CD8-positive, alpha-beta T cell (primary cell): ENCODE measurements at regions of chr17 and their contacts with region 1.

Region 1: GRCh38 chr17:75405365-75406221 is at the start of gene GRB2:
- DNase-seq: peak; percentile 99 to 100 (median 99)
- ATAC-seq: peak; percentile 83
- H3K4me3 ChIP-seq: peak within 1 kb of the TSS; percentile 58 to 100
- H3K4me3 Mint-ChIP-seq: peak within 1 kb of the TSS; percentile 98
- H3K27ac ChIP-seq: peak within 1 kb of the TSS; percentile 77 to 86
- H3K27ac Mint-ChIP-seq: peak within 1 kb of the TSS; percentile 95
- H3K4me1 ChIP-seq: peaks cover 37% of the 10 kb centered on the region
- H3K4me1 Mint-ChIP-seq: peaks cover 47% of the 10 kb centered on the region
- H3K27me3 ChIP-seq: no peaks in the 10 kb centered on the region
- H3K27me3 Mint-ChIP-seq: no peaks in the 10 kb centered on the region
- CTCF ChIP-seq: no peak
- total RNA-seq, gene GRB2: 96.2 to 99.4 TPM

Region 2: DNA sequence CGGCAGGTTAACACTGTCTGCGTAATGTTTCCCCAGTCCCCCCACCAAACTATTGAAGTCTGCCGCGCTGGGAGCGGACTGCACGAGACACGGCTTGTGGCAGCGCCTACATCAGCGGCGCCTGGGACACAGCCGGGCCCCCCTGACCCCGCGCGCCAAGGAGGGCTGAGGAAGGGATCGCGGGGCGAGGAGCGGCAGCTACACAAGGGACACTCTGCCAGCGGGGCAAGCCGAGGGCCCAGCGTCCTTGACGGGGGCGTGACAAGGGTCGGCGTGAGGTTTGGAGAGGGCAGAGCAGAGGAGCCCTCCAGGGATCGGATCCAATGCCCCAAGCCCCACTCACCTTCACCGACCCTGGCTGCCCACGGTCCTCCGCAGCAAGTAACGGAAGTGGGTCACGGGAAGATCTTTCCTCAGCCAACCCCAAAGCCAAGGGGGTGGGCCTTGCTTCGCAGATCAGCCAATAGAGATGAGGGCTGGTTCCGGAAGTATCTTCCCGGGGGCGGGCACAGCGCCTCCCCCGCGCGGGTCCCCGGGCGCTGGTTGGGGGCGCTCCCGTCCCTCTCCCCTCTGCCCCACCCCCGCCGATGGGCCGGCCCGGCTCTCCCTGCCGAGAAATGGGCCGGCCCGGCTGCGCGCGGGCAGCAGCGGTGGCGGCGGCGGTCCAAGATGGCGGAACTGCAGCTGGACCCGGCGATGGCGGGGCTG is 358.9 kb before region 1 on chr17 and contains the starts of genes ATP5PD and KCTD2:
- CTCF ChIA-PET with region 1: no interaction called
- POLR2A ChIA-PET with region 1: no interaction called
- intact Hi-C with region 1: loop called in 1 of 2 experiments (anchors 1 kb)
- DNase-seq: peak; percentile 81 to 97 (median 93)
- ATAC-seq: peak; percentile 91
- H3K4me3 ChIP-seq: peak within 1 kb of the TSS; percentile 99
- H3K4me3 Mint-ChIP-seq: peak within 1 kb of the TSS; percentile 99
- H3K27ac ChIP-seq: peak within 1 kb of the TSS; percentile 93 to 97
- H3K27ac Mint-ChIP-seq: peak within 1 kb of the TSS; percentile 98
- H3K4me1 ChIP-seq: peaks cover 21% of the 10 kb centered on the region
- H3K4me1 Mint-ChIP-seq: peaks cover 54% of the 10 kb centered on the region
- H3K27me3 ChIP-seq: no peaks in the 10 kb centered on the region
- H3K27me3 Mint-ChIP-seq: no peaks in the 10 kb centered on the region
- CTCF ChIP-seq: no peak
- total RNA-seq, gene ATP5PD: 69.9 to 71.6 TPM
- total RNA-seq, gene KCTD2: 29.4 to 31.7 TPM

Region 3: DNA sequence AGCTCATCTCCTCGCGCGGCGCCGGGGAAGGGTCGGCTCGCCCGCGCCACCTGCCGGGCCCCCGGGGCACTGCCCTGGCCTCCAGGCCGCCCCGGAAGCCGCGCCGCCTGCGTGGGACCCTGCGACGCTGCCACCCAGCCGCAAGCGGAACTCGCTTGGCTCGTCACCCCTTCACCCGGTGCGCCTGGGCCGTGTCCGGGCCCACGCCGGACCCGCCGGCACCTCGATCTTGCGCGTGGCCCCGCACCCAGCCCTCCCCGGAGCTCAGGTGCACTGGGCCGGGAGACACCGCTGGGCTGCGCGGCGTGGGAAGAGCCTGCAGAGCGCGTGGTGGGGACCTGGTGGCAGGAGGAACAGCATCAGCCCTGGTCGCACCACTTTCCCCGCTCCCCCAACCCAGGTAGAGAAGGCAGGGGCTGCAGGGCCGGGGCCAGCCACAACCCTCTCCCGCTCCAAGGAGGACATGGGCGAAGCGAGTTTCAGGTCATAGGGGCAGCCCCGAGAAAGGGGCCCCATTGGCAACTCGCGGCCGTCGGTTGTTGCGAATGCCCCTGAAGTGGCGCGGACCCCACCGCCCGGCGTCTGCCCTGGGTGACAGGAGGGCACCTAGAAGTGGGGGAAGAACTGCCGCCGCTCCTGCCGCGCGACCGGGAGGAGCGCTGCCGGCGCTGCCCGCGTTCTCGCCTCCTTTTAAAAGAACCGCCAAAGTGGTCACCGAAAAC is 134.2 kb before region 1 on chr17:
- CTCF ChIA-PET with region 1: interaction called, 5 read pairs
- POLR2A ChIA-PET with region 1: interaction called, 6 read pairs
- intact Hi-C with region 1: loop called in 1 of 2 experiments (anchors 2 kb)
- DNase-seq: peak; percentile 75 to 94 (median 88)
- ATAC-seq: peak; percentile 92
- H3K4me3 ChIP-seq: peak overlapping the region; percentile 84 to 93
- H3K4me3 Mint-ChIP-seq: peak overlapping the region; percentile 81
- H3K27ac ChIP-seq: peak overlapping the region; percentile 82 to 91
- H3K27ac Mint-ChIP-seq: peak overlapping the region; percentile 84
- H3K4me1 ChIP-seq: peaks cover 18% of the 10 kb centered on the region
- H3K4me1 Mint-ChIP-seq: peaks cover 25% of the 10 kb centered on the region
- H3K27me3 ChIP-seq: no peaks in the 10 kb centered on the region
- H3K27me3 Mint-ChIP-seq: no peaks in the 10 kb centered on the region
- CTCF ChIP-seq: peak; percentile 65

Region 4: GRCh38 chr17:75393523-75394331 is 11.9 kb before region 1 on chr17:
- CTCF ChIA-PET with region 1: interaction called, 5 read pairs
- POLR2A ChIA-PET with region 1: interaction called, 4 read pairs
- intact Hi-C with region 1: loop called (anchors 1 kb)
- DNase-seq: peak; percentile 47 to 92 (median 83)
- ATAC-seq: peak; percentile 84
- H3K4me3 ChIP-seq: peak overlapping the region; percentile 49 to 53
- H3K4me3 Mint-ChIP-seq: peak overlapping the region; percentile 94
- H3K27ac ChIP-seq: peak overlapping the region; percentile 3 to 63
- H3K27ac Mint-ChIP-seq: peak overlapping the region; percentile 90
- H3K4me1 ChIP-seq: peaks cover 55% of the 10 kb centered on the region
- H3K4me1 Mint-ChIP-seq: peaks cover 78% of the 10 kb centered on the region
- H3K27me3 ChIP-seq: no peaks in the 10 kb centered on the region
- H3K27me3 Mint-ChIP-seq: no peaks in the 10 kb centered on the region
- CTCF ChIP-seq: no peak

Region 5: DNA sequence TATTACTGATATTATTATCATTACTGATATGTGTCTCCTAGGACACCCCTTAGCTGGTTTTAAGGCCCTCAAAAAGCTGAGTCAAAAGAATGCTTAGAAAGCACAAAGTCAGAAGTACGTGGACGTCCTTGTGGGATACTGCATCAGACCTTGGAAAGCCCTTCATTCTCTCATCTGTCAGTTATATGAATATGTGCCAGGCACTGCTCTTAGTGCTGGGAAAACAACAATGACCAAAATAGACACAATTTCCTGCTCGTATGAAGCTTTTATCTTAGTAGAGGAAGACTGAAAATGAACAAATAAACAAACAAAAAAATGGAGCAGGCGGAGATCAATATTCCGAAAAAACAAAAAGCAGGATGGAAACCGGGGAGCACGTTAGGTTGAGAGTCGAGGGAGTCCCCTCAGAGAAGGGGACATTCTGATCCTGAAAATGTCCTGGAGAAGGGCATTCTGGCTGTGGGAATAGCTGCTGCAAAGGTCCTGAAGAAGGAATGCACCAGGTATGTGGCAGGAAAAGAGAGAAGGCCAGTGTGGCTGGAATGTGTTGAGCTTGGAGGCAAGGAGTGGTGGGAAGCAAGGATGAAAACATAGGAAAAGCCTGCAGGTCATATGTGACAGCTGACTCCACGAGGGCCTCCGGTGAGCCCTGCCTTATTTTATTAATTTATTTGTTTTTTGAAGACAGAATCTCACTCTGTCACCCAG is 35.3 kb after region 1 on chr17:
- CTCF ChIA-PET with region 1: no interaction called
- POLR2A ChIA-PET with region 1: no interaction called
- intact Hi-C with region 1: no loop called
- DNase-seq: no peak
- ATAC-seq: no peak
- H3K4me3 ChIP-seq: no peak overlapping the region
- H3K4me3 Mint-ChIP-seq: no peak overlapping the region
- H3K27ac ChIP-seq: no peak overlapping the region
- H3K27ac Mint-ChIP-seq: no peak overlapping the region
- H3K4me1 ChIP-seq: no peaks in the 10 kb centered on the region
- H3K4me1 Mint-ChIP-seq: peaks cover 4% of the 10 kb centered on the region
- H3K27me3 ChIP-seq: no peaks in the 10 kb centered on the region
- H3K27me3 Mint-ChIP-seq: no peaks in the 10 kb centered on the region
- CTCF ChIP-seq: no peak

Region 6: GRCh38 chr17:75524953-75525719 is 119.5 kb after region 1 on chr17 and contains the start of gene LLGL2:
- CTCF ChIA-PET with region 1: no interaction called
- POLR2A ChIA-PET with region 1: no interaction called
- intact Hi-C with region 1: loop called in 1 of 2 experiments (anchors 1 kb)
- DNase-seq: peak; percentile 74 to 94 (median 85)
- ATAC-seq: peak; percentile 94
- H3K4me3 ChIP-seq: peak within 1 kb of the TSS; percentile 70 to 78
- H3K4me3 Mint-ChIP-seq: peak within 1 kb of the TSS; percentile 82
- H3K27ac ChIP-seq: peak within 1 kb of the TSS; percentile 21 to 47
- H3K27ac Mint-ChIP-seq: no peak within 1 kb of the TSS
- H3K4me1 ChIP-seq: peaks cover 22% of the 10 kb centered on the region
- H3K4me1 Mint-ChIP-seq: peaks cover 13% of the 10 kb centered on the region
- H3K27me3 ChIP-seq: no peaks in the 10 kb centered on the region
- H3K27me3 Mint-ChIP-seq: no peaks in the 10 kb centered on the region
- CTCF ChIP-seq: no peak
- total RNA-seq, gene LLGL2: 32.7 to 36.4 TPM